A549 (cell line): ENCODE measurements at regions of chr5 and their contacts with region 1.

Region 1: DNA sequence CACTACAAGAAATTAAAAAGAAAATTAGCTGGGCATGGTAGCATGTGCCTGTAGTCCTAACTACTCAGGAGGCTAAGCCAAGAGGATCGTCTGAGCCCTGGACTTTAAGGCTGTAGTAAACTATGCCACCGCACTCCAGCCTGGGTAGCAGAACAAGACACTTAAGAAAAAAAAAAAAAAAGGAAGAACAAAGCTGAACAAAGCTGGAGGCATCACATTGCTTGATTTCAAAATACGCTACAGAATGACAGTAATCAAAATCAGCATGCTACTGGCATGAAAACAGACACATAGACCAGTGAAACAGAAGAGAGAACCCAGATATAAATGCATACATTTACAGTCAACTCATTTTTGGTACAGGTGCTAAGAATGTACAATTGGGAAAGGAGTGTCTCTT is 14.5 kb upstream of the OTULIN start:
- DNase-seq: no peak
- ATAC-seq: no peak
- H3K4me3 ChIP-seq: no peak overlapping the region
- H3K27ac ChIP-seq: no peak overlapping the region
- H3K4me1 ChIP-seq: no peaks in the 10 kb centered on the region
- CTCF ChIP-seq: no peak
- EP300 ChIP-seq: no peak
- POLR2A ChIP-seq: no peak
- RAD21 ChIP-seq: no peak

Region 2: GRCh38 chr5:13976867-13977830 is 672.9 kb before region 1 on chr5:
- CTCF ChIA-PET with region 1: interaction called, 37 read pairs
- POLR2A ChIA-PET with region 1: no interaction called
- DNase-seq: peak; percentile 49 to 79
- ATAC-seq: peak; percentile 87 to 96
- H3K4me3 ChIP-seq: no peak overlapping the region
- H3K27ac ChIP-seq: no peak overlapping the region; a peak in 1 of 6 replicates
- H3K4me1 ChIP-seq: 0 out of 3 replicates have a peak, but pooled peaks cover 3% of the 10 kb centered on the region
- CTCF ChIP-seq: peak; percentile 81
- EP300 ChIP-seq: no peak
- POLR2A ChIP-seq: no peak
- RAD21 ChIP-seq: peak; percentile 84 to 94

Region 3: GRCh38 chr5:13987843-13988464 is 662.1 kb before region 1 on chr5:
- CTCF ChIA-PET with region 1: interaction called, 16 read pairs
- POLR2A ChIA-PET with region 1: no interaction called
- DNase-seq: peak; percentile 71 to 74
- ATAC-seq: peak in 1 of 2 experiments; percentile 68; a peak in 3 of 6 replicates
- H3K4me3 ChIP-seq: no peak overlapping the region
- H3K27ac ChIP-seq: peak overlapping the region; percentile 56 to 61; a peak in 4 of 6 replicates
- H3K4me1 ChIP-seq: peaks cover 18% of the 10 kb centered on the region
- CTCF ChIP-seq: peak; percentile 97
- EP300 ChIP-seq: no peak
- POLR2A ChIP-seq: no peak
- RAD21 ChIP-seq: peak; percentile 97

Region 4: DNA sequence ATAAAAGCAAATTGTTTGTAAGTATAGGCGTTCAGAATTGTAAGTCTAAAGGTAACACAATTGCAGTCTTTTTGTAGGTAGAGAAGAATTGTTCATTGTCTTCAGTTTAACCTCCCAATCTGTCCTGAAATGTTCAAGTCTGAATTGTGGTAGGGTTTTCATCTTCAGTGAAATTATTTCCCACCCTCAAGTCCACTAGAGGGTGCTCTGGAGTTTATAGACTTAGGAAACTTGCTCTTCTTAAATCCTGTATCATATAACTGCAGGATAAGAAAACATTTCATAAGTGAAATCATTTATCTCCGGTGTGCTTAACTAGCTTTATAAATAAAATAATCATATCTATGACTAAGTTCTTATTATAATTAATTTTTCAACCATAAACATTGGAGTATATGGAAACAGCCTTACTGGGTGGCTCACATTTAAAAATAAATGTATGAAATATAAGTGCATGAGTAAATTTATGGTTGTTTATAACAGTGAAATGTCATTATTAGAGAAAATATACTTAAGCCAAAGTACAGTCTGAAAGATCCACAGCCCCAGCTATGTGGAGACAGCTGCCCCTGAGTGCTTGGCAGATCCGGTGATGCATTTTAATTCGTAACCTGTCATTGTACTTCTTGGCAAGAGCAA is 250.9 kb before region 1 on chr5:
- CTCF ChIA-PET with region 1: interaction called, 43 read pairs
- POLR2A ChIA-PET with region 1: no interaction called
- DNase-seq: peak; percentile 48 to 53
- ATAC-seq: peak in 1 of 2 experiments; percentile 76; a peak in 3 of 6 replicates
- H3K4me3 ChIP-seq: no peak overlapping the region
- H3K27ac ChIP-seq: peak overlapping the region in 1 of 2 experiments; percentile 47; a peak in 1 of 6 replicates
- H3K4me1 ChIP-seq: peaks cover 14% of the 10 kb centered on the region
- CTCF ChIP-seq: peak; percentile 75
- EP300 ChIP-seq: no peak
- POLR2A ChIP-seq: no peak
- RAD21 ChIP-seq: peak; percentile 35 to 48; a peak in 3 of 5 replicates

Region 5: GRCh38 chr5:14913096-14913495 is 263.0 kb after region 1 on chr5:
- CTCF ChIA-PET with region 1: no interaction called
- POLR2A ChIA-PET with region 1: no interaction called
- DNase-seq: no peak
- ATAC-seq: no peak
- H3K4me3 ChIP-seq: no peak overlapping the region
- H3K27ac ChIP-seq: no peak overlapping the region
- H3K4me1 ChIP-seq: peaks cover 9% of the 10 kb centered on the region; the same call in 1 of the 3 replicates
- CTCF ChIP-seq: no peak
- EP300 ChIP-seq: no peak
- POLR2A ChIP-seq: no peak
- RAD21 ChIP-seq: no peak

Region 6: GRCh38 chr5:14925326-14925725 is 275.3 kb after region 1 on chr5:
- CTCF ChIA-PET with region 1: no interaction called
- POLR2A ChIA-PET with region 1: no interaction called
- DNase-seq: no peak
- ATAC-seq: no peak
- H3K4me3 ChIP-seq: no peak overlapping the region
- H3K27ac ChIP-seq: no peak overlapping the region
- H3K4me1 ChIP-seq: no peaks in the 10 kb centered on the region
- CTCF ChIP-seq: no peak
- EP300 ChIP-seq: no peak
- POLR2A ChIP-seq: no peak
- RAD21 ChIP-seq: no peak

Region 7: DNA sequence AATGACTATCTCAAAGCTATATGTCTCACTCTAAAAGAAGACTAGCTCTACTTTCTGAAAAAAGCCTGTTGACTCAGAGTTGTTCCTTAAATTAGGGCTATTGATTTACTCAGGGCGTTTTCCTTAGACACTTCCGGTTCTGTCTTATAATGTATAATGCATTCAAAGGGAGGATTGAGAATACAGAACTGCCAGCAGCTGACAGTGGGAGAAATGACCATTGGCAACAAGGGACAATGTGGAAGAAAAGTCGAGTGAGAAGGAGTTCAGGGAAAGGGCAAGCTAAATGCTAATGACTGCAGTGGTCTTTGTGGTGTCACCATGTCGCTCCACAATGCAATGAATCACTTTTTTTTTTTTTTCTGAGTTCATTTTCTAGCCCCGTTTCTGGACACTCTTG is 287.2 kb after region 1 on chr5:
- CTCF ChIA-PET with region 1: no interaction called
- POLR2A ChIA-PET with region 1: no interaction called
- DNase-seq: no peak
- ATAC-seq: no peak
- H3K4me3 ChIP-seq: no peak overlapping the region
- H3K27ac ChIP-seq: no peak overlapping the region
- H3K4me1 ChIP-seq: no peaks in the 10 kb centered on the region
- CTCF ChIP-seq: no peak
- EP300 ChIP-seq: no peak
- POLR2A ChIP-seq: no peak
- RAD21 ChIP-seq: no peak